Endothelial cell of umbilical vein (primary cell): ENCODE measurements at regions of chr3 and their contacts with region 1.

Region 1: GRCh38 chr3:99681512-99681911 is 43.1 kb downstream of the COL8A1 start:
- DNase-seq: no peak
- H3K4me3 ChIP-seq: no peak overlapping the region
- H3K27ac ChIP-seq: no peak overlapping the region
- H3K4me1 ChIP-seq: no peaks in the 10 kb centered on the region
- H3K27me3 ChIP-seq: no peaks in the 10 kb centered on the region
- CTCF ChIP-seq: no peak
- POLR2A ChIP-seq: no peak

Region 2: GRCh38 chr3:99668044-99668443 is 13.5 kb before region 1 on chr3:
- CTCF ChIA-PET with region 1: interaction called, 10 read pairs
- POLR2A ChIA-PET with region 1: no interaction called
- dilution Hi-C with region 1: no loop called
- intact Hi-C with region 1: no loop called
- DNase-seq: no peak
- H3K4me3 ChIP-seq: no peak overlapping the region
- H3K27ac ChIP-seq: peak overlapping the region; percentile 12
- H3K4me1 ChIP-seq: peaks cover 52% of the 10 kb centered on the region
- H3K27me3 ChIP-seq: no peaks in the 10 kb centered on the region
- CTCF ChIP-seq: no peak
- POLR2A ChIP-seq: no peak